ENCODE measurements at regions of chr3 and their contacts with region 1.

Region 1: GRCh38 chr3:40580494-40581091 is 55.8 kb downstream of the ZNF621 start:
- DNase-seq: no peak

Region 2: DNA sequence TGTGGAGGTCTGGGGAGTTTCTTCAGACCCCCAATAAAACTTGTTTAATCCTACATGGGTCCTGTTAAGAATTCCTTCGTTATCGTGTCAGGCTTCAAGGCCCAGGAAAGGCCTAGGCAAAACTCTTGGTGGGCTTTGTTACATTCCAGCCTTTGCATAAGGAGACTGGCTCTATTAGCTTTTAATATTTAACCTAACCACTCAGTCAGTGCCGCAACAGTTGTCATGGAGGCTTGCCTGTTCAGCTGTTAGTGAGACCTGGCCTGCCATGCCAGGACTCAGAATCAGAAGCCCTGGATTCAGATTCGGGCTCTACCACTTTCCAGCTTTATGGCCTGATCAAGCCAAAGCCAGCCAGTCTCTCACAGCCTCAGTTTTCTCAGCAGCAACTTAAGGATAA is 251.5 kb before region 1 on chr3:
- intact Hi-C with region 1: loop called (anchors 5 kb)
- DNase-seq: no peak

Region 3: GRCh38 chr3:40877631-40878463 is 297.3 kb after region 1 on chr3:
- intact Hi-C with region 1: loop called (anchors 10 kb)
- DNase-seq: peak; percentile 82

Region 4: GRCh38 chr3:41198950-41199865 is 618.6 kb after region 1 on chr3 and contains the start of gene CTNNB1:
- intact Hi-C with region 1: loop called (anchors 5 kb)
- DNase-seq: peak; percentile 96
- total RNA-seq, gene CTNNB1: 171 TPM

Region 5: GRCh38 chr3:41881233-41881821 is 1300.7 kb after region 1 on chr3:
- intact Hi-C with region 1: loop called (anchors 2 kb)
- DNase-seq: no peak

Measured in cardiac septum (tissue), 1 donor.